CD8-positive, alpha-beta memory T cell (primary cell): ENCODE measurements at regions of chr10 and their contacts with region 1.

Region 1: DNA sequence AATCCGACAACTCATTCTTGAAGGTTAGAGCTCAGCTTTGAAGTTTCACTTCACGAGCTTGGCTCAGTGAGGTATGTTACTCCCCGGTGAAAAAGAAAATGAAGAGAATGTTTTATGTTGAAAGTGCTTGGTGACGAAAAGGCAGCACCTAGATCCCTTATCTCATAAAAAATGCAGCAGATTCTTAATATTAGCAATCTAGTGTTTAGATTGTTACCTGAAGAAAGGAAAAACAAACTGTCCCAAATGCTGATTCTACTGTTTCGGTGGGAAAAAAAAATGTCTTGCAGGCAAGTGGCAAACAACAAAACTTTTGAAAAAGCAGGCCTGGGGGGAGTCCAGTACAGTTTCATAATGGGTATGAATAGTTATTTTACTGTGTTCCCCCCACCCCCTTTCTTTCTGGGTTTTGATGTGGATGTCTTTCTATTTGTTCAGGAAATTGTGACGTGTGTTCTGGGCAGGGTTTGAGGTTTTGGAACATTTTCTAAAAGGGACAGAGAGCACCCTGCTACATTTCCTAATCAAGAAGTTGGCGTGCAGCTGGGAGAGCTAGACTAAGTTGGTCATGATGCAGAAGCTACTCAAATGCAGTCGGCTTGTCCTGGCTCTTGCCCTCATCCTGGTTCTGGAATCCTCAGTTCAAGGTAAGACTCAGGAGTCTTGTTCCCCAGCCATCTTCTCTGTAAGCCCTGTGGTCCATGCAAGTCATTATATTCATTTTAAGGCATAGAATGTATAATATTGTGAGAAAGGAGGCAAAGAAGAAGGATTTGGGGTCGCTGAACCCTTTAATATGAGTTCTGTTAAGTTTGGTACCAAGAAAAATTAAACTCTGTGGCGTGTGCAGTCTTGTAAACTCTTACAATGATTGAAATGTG is at the start of gene SRGN:
- DNase-seq: peak; percentile 55 to 90 (median 88)
- H3K4me3 ChIP-seq: peak within 1 kb of the TSS; percentile 87
- H3K4me3 Mint-ChIP-seq: peak within 1 kb of the TSS; percentile 86 to 98 (median 95)
- H3K27ac ChIP-seq: peak within 1 kb of the TSS; percentile 98
- H3K27ac Mint-ChIP-seq: peak within 1 kb of the TSS; percentile 97 to 99 (median 98)
- H3K4me1 ChIP-seq: peaks cover 46% of the 10 kb centered on the region
- H3K4me1 Mint-ChIP-seq: peaks cover 45 to 60% (median 58%) of the 10 kb centered on the region in 3 donors
- H3K27me3 ChIP-seq: no peaks in the 10 kb centered on the region
- H3K27me3 Mint-ChIP-seq: peaks cover 0 to 1% of the 10 kb centered on the region in 2 donors
- total RNA-seq, gene SRGN: 659 to 662 TPM

Region 2: GRCh38 chr10:69004821-69005220 is 83.0 kb before region 1 on chr10:
- CTCF ChIA-PET with region 1: interaction called, 91 read pairs
- POLR2A ChIA-PET with region 1: interaction called, 5 read pairs
- DNase-seq: peak in 2 of 5 donors; percentile 57 to 62
- H3K4me3 ChIP-seq: no peak overlapping the region
- H3K4me3 Mint-ChIP-seq: no peak overlapping the region
- H3K27ac ChIP-seq: no peak overlapping the region
- H3K27ac Mint-ChIP-seq: peak overlapping the region in 1 of 8 donors; percentile 12
- H3K4me1 ChIP-seq: peaks cover 3% of the 10 kb centered on the region
- H3K4me1 Mint-ChIP-seq: peaks cover 3 to 5% (median 4%) of the 10 kb centered on the region in 3 donors
- H3K27me3 ChIP-seq: no peaks in the 10 kb centered on the region
- H3K27me3 Mint-ChIP-seq: no peaks in the 10 kb centered on the region

Region 3: GRCh38 chr10:69045441-69046300 is 42.2 kb before region 1 on chr10:
- CTCF ChIA-PET with region 1: interaction called, 8 read pairs
- POLR2A ChIA-PET with region 1: interaction called, 22 read pairs
- DNase-seq: peak in 3 of 5 donors; percentile 28 to 68 (median 67)
- H3K4me3 ChIP-seq: no peak overlapping the region
- H3K4me3 Mint-ChIP-seq: peak overlapping the region; percentile 5 to 83 (median 75)
- H3K27ac ChIP-seq: peak overlapping the region; percentile 45
- H3K27ac Mint-ChIP-seq: peak overlapping the region; percentile 88 to 100 (median 98)
- H3K4me1 ChIP-seq: peaks cover 40% of the 10 kb centered on the region
- H3K4me1 Mint-ChIP-seq: peaks cover 31 to 50% (median 36%) of the 10 kb centered on the region in 3 donors
- H3K27me3 ChIP-seq: no peaks in the 10 kb centered on the region
- H3K27me3 Mint-ChIP-seq: no peaks in the 10 kb centered on the region

Region 4: GRCh38 chr10:69073026-69073425 is 14.8 kb before region 1 on chr10:
- CTCF ChIA-PET with region 1: no interaction called
- POLR2A ChIA-PET with region 1: interaction called, 10 read pairs
- DNase-seq: no peak
- H3K4me3 ChIP-seq: no peak overlapping the region
- H3K4me3 Mint-ChIP-seq: no peak overlapping the region
- H3K27ac ChIP-seq: no peak overlapping the region
- H3K27ac Mint-ChIP-seq: peak overlapping the region in 2 of 8 donors; percentile 26 to 72
- H3K4me1 ChIP-seq: no peaks in the 10 kb centered on the region
- H3K4me1 Mint-ChIP-seq: peaks cover 6 to 10% (median 6%) of the 10 kb centered on the region in 3 donors
- H3K27me3 ChIP-seq: no peaks in the 10 kb centered on the region
- H3K27me3 Mint-ChIP-seq: peaks cover 0 to 4% of the 10 kb centered on the region in 2 donors

Region 5: GRCh38 chr10:69215405-69216176 is 127.8 kb after region 1 on chr10:
- CTCF ChIA-PET with region 1: no interaction called
- POLR2A ChIA-PET with region 1: no interaction called
- DNase-seq: peak in 1 of 5 donors; percentile 26
- H3K4me3 ChIP-seq: no peak overlapping the region
- H3K4me3 Mint-ChIP-seq: peak overlapping the region in 6 of 7 donors; percentile 41 to 73 (median 57)
- H3K27ac ChIP-seq: peak overlapping the region; percentile 5
- H3K27ac Mint-ChIP-seq: peak overlapping the region in 7 of 8 donors; percentile 18 to 87 (median 80)
- H3K4me1 ChIP-seq: peaks cover 24% of the 10 kb centered on the region
- H3K4me1 Mint-ChIP-seq: peaks cover 19 to 38% (median 27%) of the 10 kb centered on the region in 3 donors
- H3K27me3 ChIP-seq: no peaks in the 10 kb centered on the region
- H3K27me3 Mint-ChIP-seq: no peaks in the 10 kb centered on the region